Vagina (tissue), 2 donors: ENCODE measurements at regions of chr21 and their contacts with region 1.

Region 1: GRCh38 chr21:29245104-29245643 is 53.5 kb upstream of the BACH1 start:
- DNase-seq: no peak
- H3K4me3 ChIP-seq: no peak overlapping the region
- H3K27ac ChIP-seq: no peak overlapping the region
- H3K4me1 ChIP-seq: no peaks in the 10 kb centered on the region
- H3K27me3 ChIP-seq: no peaks in the 10 kb centered on the region
- CTCF ChIP-seq: no peak
- POLR2A ChIP-seq: no peak

Region 2: DNA sequence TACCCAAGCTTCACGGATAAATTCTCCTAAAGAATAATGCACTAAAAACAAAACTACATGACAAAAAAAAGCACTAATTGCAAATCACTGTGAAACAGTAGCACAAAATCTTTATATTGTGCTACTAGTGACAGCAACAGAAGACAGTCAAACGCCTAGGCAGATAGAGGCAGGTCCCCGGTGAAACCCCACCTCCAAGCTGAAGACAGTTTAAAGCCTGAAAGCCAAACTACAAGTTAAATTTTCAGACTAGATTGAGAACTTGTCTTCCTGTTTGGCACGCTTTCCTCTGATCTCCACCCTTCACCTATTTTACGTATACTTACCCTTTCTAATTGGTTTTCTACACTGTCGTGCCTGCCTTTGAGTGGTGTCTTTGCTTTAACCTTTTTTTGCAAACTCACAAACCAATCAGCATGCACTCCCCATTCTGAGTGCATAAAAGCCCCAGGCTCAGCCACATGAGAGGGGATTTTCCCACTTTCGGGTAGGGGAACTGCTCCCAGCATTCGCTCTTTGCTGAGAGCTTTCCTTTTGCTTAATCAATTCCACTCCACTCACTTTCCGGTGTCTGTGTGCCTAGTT is 50.0 kb after region 1 on chr21:
- intact Hi-C with region 1: loop called (anchors 2 kb)
- DNase-seq: no peak
- H3K4me3 ChIP-seq: no peak overlapping the region
- H3K27ac ChIP-seq: no peak overlapping the region
- H3K4me1 ChIP-seq: peaks cover 11% of the 10 kb centered on the region
- H3K27me3 ChIP-seq: no peaks in the 10 kb centered on the region
- CTCF ChIP-seq: no peak
- POLR2A ChIP-seq: no peak

Region 3: GRCh38 chr21:29626801-29627470 is 381.8 kb after region 1 on chr21:
- intact Hi-C with region 1: loop called (anchors 5 kb)
- DNase-seq: no peak
- H3K4me3 ChIP-seq: no peak overlapping the region
- H3K27ac ChIP-seq: no peak overlapping the region
- H3K4me1 ChIP-seq: no peaks in the 10 kb centered on the region
- H3K27me3 ChIP-seq: no peaks in the 10 kb centered on the region
- CTCF ChIP-seq: no peak
- POLR2A ChIP-seq: no peak